Right ventricle myocardium inferior (tissue), 1 donor: ENCODE measurements at regions of chr10 and their contacts with region 1.

Region 1: GRCh38 chr10:86440874-86441843 is 74.6 kb upstream of the GRID1 start:
- DNase-seq: no peak
- ATAC-seq: no peak

Region 2: DNA sequence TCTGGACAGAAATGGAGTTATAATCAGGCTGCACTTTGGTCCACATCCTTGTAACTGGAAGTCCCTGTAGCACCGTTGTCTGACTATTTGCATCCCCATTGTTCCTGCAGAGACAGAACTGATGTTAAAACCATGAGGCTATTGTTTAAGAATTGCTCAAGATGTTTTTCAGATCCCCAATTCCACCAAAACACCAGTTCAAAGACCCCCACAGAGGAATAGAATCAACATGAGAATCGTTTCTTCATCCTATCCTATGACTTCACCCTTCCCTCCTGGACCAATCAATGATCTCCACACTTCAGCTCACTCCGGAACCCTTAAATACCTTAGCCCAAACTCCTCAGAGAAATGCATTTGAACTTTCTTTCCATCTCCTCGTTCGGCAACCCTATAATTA is 17.4 kb before region 1 on chr10:
- intact Hi-C with region 1: loop called (anchors 1 kb)
- DNase-seq: no peak
- ATAC-seq: no peak

Region 3: GRCh38 chr10:86451604-86451960 is 10.4 kb after region 1 on chr10:
- intact Hi-C with region 1: no loop called
- DNase-seq: no peak
- ATAC-seq: no peak